ENCODE measurements at regions of chrX and their contacts with region 1.

Region 1: DNA sequence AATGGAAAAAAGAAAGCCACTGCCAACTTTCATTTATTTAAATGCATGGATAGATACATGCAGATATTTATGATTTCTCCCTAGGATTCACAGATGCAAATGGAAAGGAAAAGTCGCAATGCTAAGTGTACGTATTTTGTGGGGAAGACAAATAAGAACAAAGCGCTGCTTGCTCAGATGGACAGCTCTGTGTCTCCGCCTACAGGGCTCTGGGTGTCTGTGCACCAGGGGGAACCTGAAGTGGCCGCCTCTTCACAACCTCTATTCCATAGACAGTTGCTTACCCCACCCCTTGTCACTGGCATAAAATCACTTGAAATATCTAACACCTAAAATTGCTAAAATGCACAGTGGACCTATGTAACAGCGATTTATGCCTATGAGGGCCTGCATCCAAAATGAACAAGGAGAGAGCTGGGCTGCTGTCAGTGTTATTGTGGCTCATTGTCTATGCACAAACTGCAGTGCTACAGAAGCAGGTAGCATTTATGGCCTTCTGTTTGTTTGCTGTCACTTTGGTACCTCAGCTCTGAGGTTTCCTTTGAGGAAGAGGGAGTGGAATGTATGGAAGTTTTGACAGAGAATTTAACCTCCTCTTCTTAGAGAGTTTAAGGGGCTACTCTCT is 58.6 kb upstream of the PAGE1 start:
- DNase-seq: no peak
- H3K4me3 ChIP-seq: no peak overlapping the region
- H3K27ac ChIP-seq: no peak overlapping the region
- H3K4me1 ChIP-seq: no peaks in the 10 kb centered on the region
- H3K27me3 ChIP-seq: peaks cover 0 to 2% (median 0%) of the 10 kb centered on the region in 4 donors
- CTCF ChIP-seq: peak; percentile 15 to 63 (median 46)
- POLR2A ChIP-seq: no peak

Region 2: GRCh38 chrX:49291615-49292337 is 462.6 kb before region 1 on chrX:
- intact Hi-C with region 1: loop called (anchors 10 kb)
- DNase-seq: no peak
- H3K4me3 ChIP-seq: no peak overlapping the region
- H3K27ac ChIP-seq: no peak overlapping the region
- H3K4me1 ChIP-seq: peaks cover 0 to 5% (median 0%) of the 10 kb centered on the region in 3 donors
- H3K27me3 ChIP-seq: no peaks in the 10 kb centered on the region
- CTCF ChIP-seq: peak; percentile 35 to 65 (median 59)
- POLR2A ChIP-seq: no peak

Measured in esophagus squamous epithelium (tissue), 5 donors.